ENCODE measurements at regions of chr11 and their contacts with region 1.

Region 1: DNA sequence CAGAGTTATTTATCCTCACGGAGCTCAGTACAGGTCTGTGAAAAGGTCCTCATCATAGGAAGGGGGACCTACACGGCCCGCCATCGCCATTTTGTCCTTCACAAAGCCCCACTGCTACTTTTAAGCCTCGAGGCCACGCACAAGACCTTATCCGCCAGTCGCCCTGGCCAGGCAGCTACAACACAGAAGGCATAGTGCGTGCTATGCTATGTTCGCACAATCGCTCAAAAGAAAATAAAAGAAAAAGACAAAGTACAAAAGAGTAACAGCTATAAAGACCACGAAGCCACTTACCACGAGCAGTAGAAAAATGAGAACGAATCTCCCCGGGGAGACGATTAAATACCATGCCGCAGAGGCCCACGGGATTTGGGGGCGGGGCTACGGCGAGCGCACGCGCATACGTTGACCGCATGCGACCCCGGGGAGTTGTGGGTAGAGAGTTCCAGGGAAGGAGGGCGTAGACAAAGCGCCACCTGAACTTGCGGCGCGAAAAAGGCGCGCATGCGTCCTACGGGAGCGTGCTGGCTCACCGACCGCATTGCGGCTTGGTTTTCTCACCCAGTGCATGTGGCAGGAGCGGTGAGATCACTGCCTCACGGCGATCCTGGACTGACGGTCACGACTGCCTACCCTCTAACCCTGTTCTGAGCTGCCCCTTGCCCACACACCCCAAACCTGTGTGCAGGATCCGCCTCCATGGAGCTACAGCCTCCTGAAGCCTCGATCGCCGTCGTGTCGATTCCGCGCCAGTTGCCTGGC is 16.4 kb upstream of the WDR74 start:
- DNase-seq: peak; percentile 99
- ATAC-seq: peak; percentile 83
- H3K4me3 Mint-ChIP-seq: peak overlapping the region; percentile 99
- H3K27ac Mint-ChIP-seq: peak overlapping the region; percentile 97
- H3K4me1 Mint-ChIP-seq: peaks cover 53% of the 10 kb centered on the region
- H3K27me3 Mint-ChIP-seq: no peaks in the 10 kb centered on the region

Region 2: DNA sequence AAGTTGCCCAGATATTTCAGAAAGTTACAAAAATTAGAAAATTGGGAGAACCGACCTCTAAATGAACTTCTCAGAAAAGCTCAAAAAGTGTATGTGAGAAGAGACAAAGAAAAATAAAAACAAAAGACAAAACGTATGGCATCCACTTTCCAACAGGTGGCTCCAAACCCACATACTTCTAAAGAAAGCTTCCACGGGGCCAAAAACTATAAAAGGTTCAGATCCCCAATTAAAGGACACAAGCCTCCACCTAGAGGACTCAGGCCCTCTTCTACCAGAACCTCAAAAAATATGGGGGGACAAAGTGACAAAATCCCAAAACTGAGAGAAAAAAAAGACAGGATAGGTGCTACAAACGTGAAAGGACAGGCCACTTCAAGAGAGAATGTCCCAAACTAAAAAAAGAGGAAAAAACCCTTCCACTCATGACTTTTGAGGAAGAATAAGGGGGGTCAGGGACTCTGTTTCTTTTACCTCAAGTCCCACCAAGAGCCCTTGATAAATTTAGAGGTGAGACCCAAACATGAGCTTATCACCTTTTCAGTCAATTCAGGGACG is 638.5 kb before region 1 on chr11:
- CTCF ChIA-PET with region 1: no interaction called
- POLR2A ChIA-PET with region 1: no interaction called
- intact Hi-C with region 1: no loop called
- DNase-seq: peak; percentile 8
- ATAC-seq: no peak
- H3K4me3 Mint-ChIP-seq: no peak overlapping the region
- H3K27ac Mint-ChIP-seq: no peak overlapping the region
- H3K4me1 Mint-ChIP-seq: no peaks in the 10 kb centered on the region
- H3K27me3 Mint-ChIP-seq: peaks cover 11% of the 10 kb centered on the region

Region 3: GRCh38 chr11:62612366-62613290 is 243.1 kb before region 1 on chr11 and contains the starts of genes EML3 and ROM1:
- CTCF ChIA-PET with region 1: no interaction called
- POLR2A ChIA-PET with region 1: no interaction called
- intact Hi-C with region 1: loop called in 1 of 2 experiments (anchors 5 kb)
- DNase-seq: peak; percentile 91
- ATAC-seq: peak; percentile 78
- H3K4me3 Mint-ChIP-seq: peak within 1 kb of the TSS; percentile 91
- H3K27ac Mint-ChIP-seq: peak within 1 kb of the TSS; percentile 90
- H3K4me1 Mint-ChIP-seq: peaks cover 37% of the 10 kb centered on the region
- H3K27me3 Mint-ChIP-seq: no peaks in the 10 kb centered on the region
- total RNA-seq, gene EML3: 101 to 112 TPM
- total RNA-seq, gene ROM1: 1.5 to 1.9 TPM

Region 4: GRCh38 chr11:62645956-62646824 is 209.6 kb before region 1 on chr11 and contains the start of gene GANAB:
- CTCF ChIA-PET with region 1: no interaction called
- POLR2A ChIA-PET with region 1: interaction called, 13 read pairs
- intact Hi-C with region 1: no loop called
- DNase-seq: peak; percentile 100
- ATAC-seq: peak; percentile 99
- H3K4me3 Mint-ChIP-seq: peak within 1 kb of the TSS; percentile 93
- H3K27ac Mint-ChIP-seq: peak within 1 kb of the TSS; percentile 93
- H3K4me1 Mint-ChIP-seq: peaks cover 34% of the 10 kb centered on the region
- H3K27me3 Mint-ChIP-seq: no peaks in the 10 kb centered on the region
- total RNA-seq, gene GANAB: 208 to 218 TPM

Region 5: GRCh38 chr11:62787005-62787759 is 68.6 kb before region 1 on chr11 and contains the start of gene TMEM179B:
- CTCF ChIA-PET with region 1: interaction called, 44 read pairs
- POLR2A ChIA-PET with region 1: interaction called, 12 read pairs
- intact Hi-C with region 1: loop called (anchors 1 kb)
- DNase-seq: peak; percentile 99
- ATAC-seq: peak; percentile 63
- H3K4me3 Mint-ChIP-seq: peak within 1 kb of the TSS; percentile 90
- H3K27ac Mint-ChIP-seq: peak within 1 kb of the TSS; percentile 95
- H3K4me1 Mint-ChIP-seq: peaks cover 42% of the 10 kb centered on the region
- H3K27me3 Mint-ChIP-seq: no peaks in the 10 kb centered on the region
- total RNA-seq, gene TMEM179B: 19.5 to 35.9 TPM

Region 6: GRCh38 chr11:62805076-62805892 is 50.5 kb before region 1 on chr11 and contains the start of gene NXF1:
- CTCF ChIA-PET with region 1: no interaction called
- POLR2A ChIA-PET with region 1: interaction called, 6 read pairs
- intact Hi-C with region 1: loop called (anchors 1 kb)
- DNase-seq: peak; percentile 97
- ATAC-seq: peak; percentile 79
- H3K4me3 Mint-ChIP-seq: peak within 1 kb of the TSS; percentile 99
- H3K27ac Mint-ChIP-seq: peak within 1 kb of the TSS; percentile 97
- H3K4me1 Mint-ChIP-seq: peaks cover 29% of the 10 kb centered on the region
- H3K27me3 Mint-ChIP-seq: no peaks in the 10 kb centered on the region
- total RNA-seq, gene NXF1: 89.5 to 97.6 TPM

Region 7: GRCh38 chr11:63042596-63042995 is 186.8 kb after region 1 on chr11:
- CTCF ChIA-PET with region 1: no interaction called
- POLR2A ChIA-PET with region 1: no interaction called
- intact Hi-C with region 1: no loop called
- DNase-seq: no peak
- ATAC-seq: no peak
- H3K4me3 Mint-ChIP-seq: no peak overlapping the region
- H3K27ac Mint-ChIP-seq: no peak overlapping the region
- H3K4me1 Mint-ChIP-seq: no peaks in the 10 kb centered on the region
- H3K27me3 Mint-ChIP-seq: peaks cover 19% of the 10 kb centered on the region

Region 8: DNA sequence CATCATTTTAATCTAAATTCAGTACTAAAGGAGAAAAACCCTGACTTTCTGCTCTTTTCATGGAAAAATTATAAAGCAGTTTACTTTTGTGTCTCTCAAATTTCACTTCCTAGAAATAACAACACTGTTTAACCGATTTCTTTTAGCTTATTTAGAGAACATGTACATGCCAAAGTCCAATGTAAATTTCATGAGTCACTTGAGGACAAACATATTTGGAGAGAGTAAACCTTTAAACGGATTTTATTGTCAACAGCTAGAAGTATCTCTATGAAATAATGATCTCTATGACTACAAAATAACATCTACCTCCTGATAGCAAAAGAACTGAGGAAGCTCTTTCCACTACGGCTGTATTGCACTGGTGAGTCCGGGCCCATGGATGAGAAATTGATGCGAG is 433.9 kb after region 1 on chr11:
- CTCF ChIA-PET with region 1: no interaction called
- POLR2A ChIA-PET with region 1: no interaction called
- intact Hi-C with region 1: no loop called
- DNase-seq: no peak
- ATAC-seq: no peak
- H3K4me3 Mint-ChIP-seq: no peak overlapping the region
- H3K27ac Mint-ChIP-seq: no peak overlapping the region
- H3K4me1 Mint-ChIP-seq: no peaks in the 10 kb centered on the region
- H3K27me3 Mint-ChIP-seq: peaks cover 22% of the 10 kb centered on the region

Region 9: DNA sequence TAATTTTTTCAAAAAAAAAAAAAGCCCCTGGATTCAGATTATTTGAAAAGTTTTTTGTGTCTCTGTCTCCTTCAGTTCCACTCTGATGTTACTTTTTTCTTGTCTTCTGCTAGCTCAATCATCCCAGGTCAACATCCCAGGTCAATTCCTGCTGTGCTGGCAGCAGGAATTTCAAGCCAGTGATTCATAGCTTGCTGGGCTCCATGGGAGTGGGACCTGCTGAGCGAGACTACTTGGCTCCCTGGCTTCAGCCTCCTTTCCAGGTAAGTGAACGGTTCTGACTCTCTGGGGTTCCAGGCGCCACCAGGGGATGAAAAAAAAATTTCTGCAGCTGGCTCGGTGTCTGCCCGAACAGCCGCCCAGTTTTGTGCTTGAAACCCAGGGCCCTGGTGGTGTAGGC is 603.8 kb after region 1 on chr11:
- CTCF ChIA-PET with region 1: no interaction called
- POLR2A ChIA-PET with region 1: no interaction called
- intact Hi-C with region 1: no loop called
- DNase-seq: no peak
- ATAC-seq: no peak
- H3K4me3 Mint-ChIP-seq: no peak overlapping the region
- H3K27ac Mint-ChIP-seq: no peak overlapping the region
- H3K4me1 Mint-ChIP-seq: no peaks in the 10 kb centered on the region
- H3K27me3 Mint-ChIP-seq: peaks cover 4% of the 10 kb centered on the region

Measured in activated CD4-positive, alpha-beta T cell treated with anti-CD3 and anti-CD28 coated beads for 36 hours (primary cell).